ENCODE measurements at regions of chr11 and their contacts with region 1.

Region 1: GRCh38 chr11:129950101-129951091 is 52.2 kb downstream of the PRDM10 start:
- DNase-seq: peak; percentile 76
- H3K4me3 ChIP-seq: peak overlapping the region; percentile 45
- H3K27ac ChIP-seq: peak overlapping the region; percentile 91
- H3K4me1 ChIP-seq: peaks cover 56% of the 10 kb centered on the region
- CTCF ChIP-seq: no peak

Region 2: GRCh38 chr11:129922674-129923073 is 27.7 kb before region 1 on chr11:
- CTCF ChIA-PET with region 1: interaction called, 7 read pairs
- POLR2A ChIA-PET with region 1: interaction called, 14 read pairs
- intact Hi-C with region 1: loop called (anchors 1 kb)
- DNase-seq: no peak
- H3K4me3 ChIP-seq: no peak overlapping the region
- H3K27ac ChIP-seq: no peak overlapping the region
- H3K4me1 ChIP-seq: peaks cover 20% of the 10 kb centered on the region
- CTCF ChIP-seq: no peak

Region 3: GRCh38 chr11:129937592-129938238 is 12.7 kb before region 1 on chr11:
- CTCF ChIA-PET with region 1: interaction called, 5 read pairs
- POLR2A ChIA-PET with region 1: interaction called, 11 read pairs
- intact Hi-C with region 1: no loop called
- DNase-seq: peak; percentile 30
- H3K4me3 ChIP-seq: no peak overlapping the region
- H3K27ac ChIP-seq: peak overlapping the region; percentile 48
- H3K4me1 ChIP-seq: peaks cover 60% of the 10 kb centered on the region
- CTCF ChIP-seq: no peak

Region 4: GRCh38 chr11:129973068-129973467 is 22.7 kb after region 1 on chr11:
- CTCF ChIA-PET with region 1: interaction called, 21 read pairs
- POLR2A ChIA-PET with region 1: interaction called, 86 read pairs
- intact Hi-C with region 1: loop called (anchors 1 kb)
- DNase-seq: peak; percentile 94
- H3K4me3 ChIP-seq: peak overlapping the region; percentile 60
- H3K27ac ChIP-seq: peak overlapping the region; percentile 98
- H3K4me1 ChIP-seq: peaks cover 88% of the 10 kb centered on the region
- CTCF ChIP-seq: no peak

Region 5: GRCh38 chr11:130069684-130070108 is 119.3 kb after region 1 on chr11 and contains the start of gene APLP2:
- CTCF ChIA-PET with region 1: no interaction called
- POLR2A ChIA-PET with region 1: interaction called, 8 read pairs
- intact Hi-C with region 1: loop called (anchors 1 kb)
- DNase-seq: peak; percentile 99
- H3K4me3 ChIP-seq: peak within 1 kb of the TSS; percentile 81
- H3K27ac ChIP-seq: peak within 1 kb of the TSS; percentile 57
- H3K4me1 ChIP-seq: peaks cover 49% of the 10 kb centered on the region
- CTCF ChIP-seq: no peak
- total RNA-seq, gene APLP2: 144 and 147 TPM in 2 replicates

Region 6: DNA sequence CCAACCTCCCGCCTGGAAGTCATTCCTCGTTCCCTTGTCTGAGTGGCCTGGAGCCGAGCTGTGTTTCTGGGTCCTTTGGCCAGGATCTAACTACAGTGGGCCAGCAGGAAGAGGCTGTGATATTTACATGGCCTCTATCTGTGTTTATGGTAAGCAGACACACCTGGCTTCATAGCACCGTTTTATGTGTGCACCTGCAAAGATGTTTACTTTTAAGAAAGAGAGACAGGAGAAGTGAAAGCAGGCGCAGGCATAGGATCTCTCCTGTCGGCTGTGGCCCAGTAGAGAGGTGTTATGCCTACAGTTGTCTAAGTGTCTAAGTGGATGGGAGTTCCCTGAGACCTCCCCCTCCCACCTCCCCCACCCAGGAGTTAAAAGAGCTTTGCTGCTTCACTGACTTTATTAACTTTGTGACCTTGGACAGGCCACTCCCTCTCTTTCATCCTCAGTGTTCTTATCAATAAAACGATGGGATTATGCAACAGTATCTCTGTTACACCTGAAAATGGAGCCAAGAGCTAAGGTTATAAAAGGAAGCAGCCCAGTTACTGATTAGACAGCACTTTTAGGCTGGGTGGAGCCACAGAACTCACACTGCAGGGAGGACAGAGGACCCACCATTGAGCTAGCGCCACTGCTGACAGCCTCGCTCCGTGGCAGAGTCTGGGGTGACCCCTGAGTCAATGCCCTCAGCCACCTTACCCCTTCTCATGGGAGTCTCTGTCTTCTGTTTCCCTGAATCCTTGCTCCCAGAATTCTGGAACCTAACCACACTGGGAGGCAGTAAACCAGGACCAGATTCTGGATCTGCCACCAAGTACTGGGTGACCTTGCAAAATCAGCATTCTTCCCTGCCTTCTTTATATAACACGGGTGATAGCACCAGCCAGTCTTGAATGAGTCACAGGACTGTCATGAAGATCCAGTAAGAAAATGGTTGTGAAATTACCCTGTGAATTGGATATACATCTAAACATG is 231.2 kb after region 1 on chr11:
- CTCF ChIA-PET with region 1: no interaction called
- POLR2A ChIA-PET with region 1: interaction called, 4 read pairs
- intact Hi-C with region 1: loop called (anchors 5 kb)
- DNase-seq: peak; percentile 98
- H3K4me3 ChIP-seq: peak overlapping the region; percentile 64
- H3K27ac ChIP-seq: peak overlapping the region; percentile 99
- H3K4me1 ChIP-seq: peaks cover 96% of the 10 kb centered on the region
- CTCF ChIP-seq: peak; percentile 35; the same call in 1 of the 2 replicates